ENCODE measurements at regions of chr11 and their contacts with region 1.

Region 1: DNA sequence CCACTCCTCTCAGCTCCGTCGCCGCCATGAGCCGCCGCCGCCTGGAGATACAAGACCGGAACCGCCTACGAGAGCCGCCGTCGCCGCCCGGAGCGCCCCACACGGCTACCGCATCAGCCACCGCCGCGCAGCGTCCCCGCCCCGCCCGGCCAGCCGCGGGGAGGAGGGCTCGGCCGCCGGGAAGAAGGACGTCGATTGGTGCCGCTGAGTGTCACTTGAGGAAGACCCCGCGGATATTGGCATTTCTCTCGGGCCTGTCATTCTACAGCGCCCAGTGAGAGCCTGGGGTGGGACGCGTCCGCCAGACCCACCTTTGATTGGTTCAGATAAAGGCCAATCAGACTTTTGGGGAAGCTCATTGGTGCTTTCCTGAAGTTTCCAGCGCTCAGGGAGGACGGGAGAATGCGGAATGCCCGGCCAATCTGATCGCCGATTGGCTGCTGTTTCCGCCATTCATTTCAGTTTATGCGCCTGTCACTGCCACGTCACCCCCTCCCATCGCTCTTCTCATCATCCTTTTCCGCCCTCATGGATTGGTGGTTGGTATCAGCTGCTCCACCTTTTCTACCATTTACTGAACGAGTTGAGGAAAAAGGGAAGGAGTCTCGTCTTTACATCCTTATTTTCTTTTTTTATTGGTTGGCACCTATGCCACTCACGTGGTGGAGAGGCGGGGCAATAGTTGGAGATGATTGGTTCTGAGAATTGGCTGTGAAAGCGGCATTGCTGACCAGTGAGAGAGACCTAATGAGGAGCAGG is at the start of gene OSBP:
- DNase-seq: peak; percentile 98 to 100 (median 100)

Region 2: GRCh38 chr11:59417023-59417422 is 198.8 kb before region 1 on chr11:
- intact Hi-C with region 1: no loop called
- DNase-seq: no peak

Region 3: GRCh38 chr11:59560702-59561469 is 54.9 kb before region 1 on chr11:
- intact Hi-C with region 1: loop called (anchors 2 kb)
- DNase-seq: peak in 9 of 10 donors; percentile 70 to 95 (median 76)

Region 4: DNA sequence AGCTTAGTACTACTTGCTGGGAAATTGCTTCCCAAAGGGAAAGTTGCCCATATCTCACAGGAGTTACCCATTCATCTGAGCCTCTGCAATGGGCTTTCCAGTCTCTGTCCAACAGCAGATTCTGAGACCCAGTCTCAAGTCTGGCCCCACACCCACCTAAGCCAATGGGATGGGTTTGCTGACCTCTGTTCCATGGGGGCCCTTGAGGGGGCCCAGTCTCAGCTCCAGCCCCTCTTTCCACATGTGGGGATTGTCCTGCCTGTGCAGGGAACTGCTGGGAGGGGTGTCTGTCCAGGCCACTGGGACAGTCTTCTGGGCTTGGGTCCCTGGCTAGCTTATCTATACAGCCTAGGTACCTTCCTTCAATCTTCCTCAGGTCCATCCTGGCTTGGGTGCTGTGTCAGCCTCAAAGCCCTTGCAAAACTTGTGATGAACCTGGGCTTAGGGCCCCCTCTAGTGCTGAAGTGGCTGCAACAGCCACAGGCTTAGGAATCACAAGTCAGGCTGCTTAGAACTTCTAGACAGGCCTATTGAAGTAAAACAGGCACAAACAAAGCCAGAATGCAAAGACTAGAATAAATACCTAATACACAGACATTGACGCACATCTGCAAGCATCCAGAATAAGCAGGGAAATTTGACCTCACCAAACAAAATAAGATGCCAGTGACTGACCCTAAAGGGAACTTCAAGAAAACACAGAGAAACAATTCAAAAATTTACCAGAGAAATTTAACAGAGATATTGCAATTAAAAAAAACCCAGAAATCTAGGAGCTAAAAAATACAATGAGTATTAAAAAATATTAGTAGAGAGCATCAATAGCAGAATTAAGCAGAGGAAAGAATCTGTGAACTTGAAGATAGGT is 64.7 kb after region 1 on chr11:
- intact Hi-C with region 1: no loop called
- DNase-seq: peak in 4 of 10 donors; percentile 5 to 85 (median 19)

Measured in posterior cingulate gyrus (tissue), 11 donors.